ENCODE measurements at regions of chr21 and their contacts with region 1.

Region 1: GRCh38 chr21:31509194-31510017 is 150.1 kb upstream of the SOD1 start:
- DNase-seq: peak; percentile 39
- ATAC-seq: no peak
- H3K4me3 ChIP-seq: no peak overlapping the region
- H3K4me3 Mint-ChIP-seq: peak overlapping the region; percentile 65
- H3K27ac ChIP-seq: no peak overlapping the region
- H3K27ac Mint-ChIP-seq: peak overlapping the region; percentile 55
- H3K4me1 ChIP-seq: peaks cover 28 to 41% of the 10 kb centered on the region in 2 donors
- H3K4me1 Mint-ChIP-seq: peaks cover 39% of the 10 kb centered on the region
- H3K27me3 ChIP-seq: no peaks in the 10 kb centered on the region
- H3K27me3 Mint-ChIP-seq: peaks cover 3% of the 10 kb centered on the region
- CTCF ChIP-seq: peak; percentile 45

Region 2: DNA sequence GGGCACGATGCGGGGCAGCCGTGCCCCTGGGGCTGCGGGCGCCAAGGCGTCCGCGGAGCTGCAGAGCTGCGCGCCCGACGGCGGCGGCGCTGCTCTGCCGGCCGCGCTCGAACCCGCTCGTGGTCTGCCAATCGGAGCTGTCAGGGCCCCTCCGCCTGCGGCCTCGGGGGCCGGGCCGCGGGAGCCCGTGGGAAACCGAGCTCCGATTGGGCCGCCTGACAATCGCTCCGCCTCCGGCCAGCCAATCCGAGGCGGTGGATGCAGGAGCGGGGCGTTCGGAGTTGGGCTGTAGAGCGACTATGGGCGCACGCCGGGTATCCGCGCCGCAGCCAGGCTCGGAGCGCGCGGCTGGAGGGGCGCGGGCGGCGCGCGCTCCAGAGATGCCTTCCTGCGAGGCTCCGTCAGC is 49.6 kb after region 1 on chr21:
- CTCF ChIA-PET with region 1: interaction called, 3 read pairs
- POLR2A ChIA-PET with region 1: no interaction called
- intact Hi-C with region 1: loop called (anchors 1 kb)
- DNase-seq: peak; percentile 93
- ATAC-seq: peak; percentile 88
- H3K4me3 ChIP-seq: peak overlapping the region in 4 of 5 experiments; percentile 55 to 78 (median 59)
- H3K4me3 Mint-ChIP-seq: peak overlapping the region; percentile 95
- H3K27ac ChIP-seq: no peak overlapping the region
- H3K27ac Mint-ChIP-seq: no peak overlapping the region
- H3K4me1 ChIP-seq: peaks cover 20% of the 10 kb centered on the region in 2 donors
- H3K4me1 Mint-ChIP-seq: peaks cover 22% of the 10 kb centered on the region
- H3K27me3 ChIP-seq: peaks cover 0 to 24% (median 12%) of the 10 kb centered on the region in 4 experiments
- H3K27me3 Mint-ChIP-seq: peaks cover 26% of the 10 kb centered on the region
- CTCF ChIP-seq: peak; percentile 34